ENCODE measurements at regions of chr14 and their contacts with region 1.

Region 1: DNA sequence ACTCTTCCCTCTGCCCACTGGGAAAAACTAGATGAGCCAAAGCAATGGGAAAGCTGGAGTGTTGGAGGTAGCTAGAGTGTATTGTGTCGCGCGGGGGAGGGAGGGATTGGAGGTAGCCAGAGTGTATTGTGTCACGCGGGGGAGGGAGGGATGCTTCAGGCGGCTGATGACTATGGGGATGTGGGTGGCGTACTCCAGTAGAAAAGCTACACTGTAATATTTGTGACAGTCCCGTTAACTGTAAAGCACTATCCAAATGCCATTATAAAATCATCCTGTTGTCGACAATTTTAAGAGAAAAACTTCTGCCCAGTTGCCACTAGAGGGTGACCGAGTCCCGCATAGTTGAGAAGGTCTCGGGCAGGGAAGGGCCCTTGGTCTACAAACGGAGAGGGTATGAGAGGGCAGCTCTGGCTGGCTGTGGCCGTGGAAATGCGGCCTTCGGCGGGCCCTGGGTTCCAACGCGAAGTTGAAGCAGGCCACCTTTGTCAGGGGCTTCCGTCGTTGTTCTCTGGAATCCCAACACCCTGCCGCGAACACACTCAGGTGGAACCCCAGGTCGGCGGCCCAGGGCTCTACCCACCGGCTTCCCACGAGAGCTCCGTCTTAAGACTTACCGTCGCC is 15.1 kb upstream of the PLEK2 start:
- DNase-seq: peak; percentile 67
- H3K4me3 ChIP-seq: no peak overlapping the region
- H3K27ac ChIP-seq: no peak overlapping the region
- H3K4me1 ChIP-seq: peaks cover 2% of the 10 kb centered on the region
- H3K27me3 ChIP-seq: peaks cover 1 to 2% of the 10 kb centered on the region in 2 experiments
- CTCF ChIP-seq: peak; percentile 73 to 78
- POLR2A ChIP-seq: no peak

Region 2: GRCh38 chr14:67377916-67378315 is 49.2 kb before region 1 on chr14:
- CTCF ChIA-PET with region 1: no interaction called
- POLR2A ChIA-PET with region 1: no interaction called
- dilution Hi-C with region 1: no loop called
- intact Hi-C with region 1: no loop called
- DNase-seq: no peak
- H3K4me3 ChIP-seq: no peak overlapping the region
- H3K27ac ChIP-seq: no peak overlapping the region
- H3K4me1 ChIP-seq: peaks cover 7% of the 10 kb centered on the region
- H3K27me3 ChIP-seq: no peaks in the 10 kb centered on the region
- CTCF ChIP-seq: no peak
- POLR2A ChIP-seq: no peak

Region 3: GRCh38 chr14:67396501-67396900 is 30.6 kb before region 1 on chr14:
- CTCF ChIA-PET with region 1: interaction called, 12 read pairs
- POLR2A ChIA-PET with region 1: no interaction called
- dilution Hi-C with region 1: no loop called
- intact Hi-C with region 1: no loop called
- DNase-seq: no peak
- H3K4me3 ChIP-seq: no peak overlapping the region
- H3K27ac ChIP-seq: peak overlapping the region; percentile 2
- H3K4me1 ChIP-seq: peaks cover 16% of the 10 kb centered on the region
- H3K27me3 ChIP-seq: no peaks in the 10 kb centered on the region
- CTCF ChIP-seq: no peak
- POLR2A ChIP-seq: no peak

Region 4: DNA sequence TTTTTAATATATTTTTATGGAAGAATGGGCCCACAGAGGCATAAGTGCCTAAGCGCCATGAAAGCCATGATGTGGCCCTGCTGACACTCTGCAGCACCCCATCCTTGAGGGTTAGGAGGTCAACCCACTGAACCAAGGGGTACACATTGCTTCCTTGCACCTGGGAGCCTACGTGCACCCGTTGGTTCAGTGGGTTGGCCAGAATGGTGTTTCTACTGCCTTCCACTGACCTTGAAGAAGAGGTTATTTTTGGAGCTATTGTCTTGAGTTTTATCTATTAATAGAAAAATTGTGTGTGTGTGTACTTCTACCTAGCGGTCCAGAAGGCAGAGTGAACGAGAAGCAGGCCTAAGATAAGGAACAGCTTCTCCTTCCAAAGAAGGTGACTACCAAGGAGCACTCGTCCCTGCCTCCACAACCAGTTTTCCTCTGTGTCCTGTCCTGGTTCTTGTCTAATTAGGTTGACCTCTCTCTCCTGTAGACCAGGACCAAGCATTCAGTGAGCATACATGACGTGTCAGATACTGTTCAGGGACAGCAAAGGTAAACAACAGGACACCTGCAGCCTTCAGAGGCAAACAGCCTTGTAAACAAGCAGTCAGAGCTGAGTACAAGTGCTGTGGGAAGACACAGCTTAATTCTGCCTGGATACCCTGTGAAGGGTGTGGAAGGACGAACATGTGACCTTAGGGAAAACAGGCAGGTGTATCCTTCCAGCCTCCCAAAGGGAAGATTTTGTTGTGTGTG is 15.2 kb after region 1 on chr14:
- CTCF ChIA-PET with region 1: interaction called, 34 read pairs
- POLR2A ChIA-PET with region 1: no interaction called
- dilution Hi-C with region 1: no loop called
- intact Hi-C with region 1: no loop called
- DNase-seq: no peak
- H3K4me3 ChIP-seq: no peak overlapping the region
- H3K27ac ChIP-seq: no peak overlapping the region
- H3K4me1 ChIP-seq: peaks cover 9% of the 10 kb centered on the region
- H3K27me3 ChIP-seq: peaks cover 0 to 4% of the 10 kb centered on the region in 2 experiments
- CTCF ChIP-seq: no peak
- POLR2A ChIP-seq: no peak

Region 5: GRCh38 chr14:67526676-67527459 is 99.8 kb after region 1 on chr14:
- CTCF ChIA-PET with region 1: interaction called, 48 read pairs
- POLR2A ChIA-PET with region 1: no interaction called
- dilution Hi-C with region 1: no loop called
- intact Hi-C with region 1: loop called (anchors 2 kb)
- DNase-seq: peak; percentile 62
- H3K4me3 ChIP-seq: no peak overlapping the region
- H3K27ac ChIP-seq: no peak overlapping the region
- H3K4me1 ChIP-seq: no peaks in the 10 kb centered on the region
- H3K27me3 ChIP-seq: peaks cover 29 to 36% of the 10 kb centered on the region in 2 experiments
- CTCF ChIP-seq: peak; percentile 56 to 70
- POLR2A ChIP-seq: no peak

Region 6: DNA sequence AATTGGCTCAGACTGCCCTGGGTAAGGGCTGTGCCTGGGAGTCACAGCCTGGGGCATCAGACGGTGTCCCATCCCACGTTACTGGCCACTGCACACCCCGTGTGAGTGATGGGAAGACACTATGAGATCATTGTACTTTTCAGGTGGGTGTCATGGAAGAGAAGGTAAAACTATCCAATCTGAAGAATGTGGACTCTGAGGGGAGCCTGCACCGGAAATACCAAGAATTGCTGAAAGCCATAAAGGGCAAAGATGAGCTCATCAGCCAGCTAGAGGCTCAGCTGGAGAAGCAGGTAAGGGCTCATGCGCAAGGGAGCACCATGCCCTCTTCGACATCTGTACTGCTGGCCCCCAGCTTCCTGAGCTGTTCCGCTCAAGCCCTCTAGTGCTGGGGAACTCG is 130.0 kb after region 1 on chr14:
- CTCF ChIA-PET with region 1: interaction called, 10 read pairs
- POLR2A ChIA-PET with region 1: no interaction called
- dilution Hi-C with region 1: no loop called
- intact Hi-C with region 1: no loop called
- DNase-seq: no peak
- H3K4me3 ChIP-seq: no peak overlapping the region
- H3K27ac ChIP-seq: no peak overlapping the region
- H3K4me1 ChIP-seq: no peaks in the 10 kb centered on the region
- H3K27me3 ChIP-seq: peaks cover 0 to 2% of the 10 kb centered on the region in 2 experiments
- CTCF ChIP-seq: no peak
- POLR2A ChIP-seq: no peak

Region 7: DNA sequence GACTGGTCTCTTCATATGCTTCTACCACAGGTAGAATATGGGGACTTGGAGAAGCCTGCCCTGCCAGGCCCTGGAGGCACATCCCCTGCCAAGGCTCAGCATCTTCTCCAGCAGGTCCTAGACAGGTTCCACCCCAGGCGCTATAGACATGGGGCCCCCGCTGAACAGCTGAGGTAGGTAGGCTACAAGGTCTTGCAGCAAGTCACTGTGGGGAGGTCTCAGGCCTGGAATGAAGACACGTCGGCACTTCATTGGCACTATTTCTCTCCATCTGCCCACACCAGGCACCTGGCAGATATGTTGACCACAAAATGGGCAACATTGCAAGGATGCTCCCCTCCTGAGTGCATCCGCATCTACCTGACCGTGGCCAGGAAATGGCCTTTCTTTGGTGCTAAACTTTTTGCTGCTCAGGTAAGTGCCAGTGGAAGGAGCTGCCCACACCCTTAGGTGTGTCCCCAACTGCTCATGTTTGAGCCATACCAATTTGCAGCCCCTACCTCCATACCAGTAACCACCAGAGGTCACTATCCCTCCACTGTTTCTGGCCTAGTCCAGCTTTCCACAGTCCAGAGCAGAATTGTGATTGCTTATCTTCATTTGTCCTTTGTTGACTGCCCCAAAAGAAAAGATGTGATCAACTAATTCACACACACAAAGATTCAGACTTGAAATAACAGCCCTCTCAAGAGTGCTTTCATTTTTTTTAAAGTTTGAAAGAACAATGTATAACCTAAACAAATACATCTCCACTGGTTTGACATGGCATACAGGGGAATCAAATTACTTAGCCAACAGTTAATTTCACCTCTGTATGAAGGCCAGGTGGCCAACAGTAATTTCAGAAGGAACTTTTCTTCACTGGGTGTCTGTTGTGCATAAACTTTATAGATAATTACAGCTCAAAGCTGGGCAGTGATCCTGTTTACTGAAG is 156.9 kb after region 1 on chr14:
- CTCF ChIA-PET with region 1: interaction called, 38 read pairs
- POLR2A ChIA-PET with region 1: no interaction called
- dilution Hi-C with region 1: no loop called
- intact Hi-C with region 1: no loop called
- DNase-seq: peak; percentile 53
- H3K4me3 ChIP-seq: no peak overlapping the region
- H3K27ac ChIP-seq: no peak overlapping the region
- H3K4me1 ChIP-seq: no peaks in the 10 kb centered on the region
- H3K27me3 ChIP-seq: peaks cover 0 to 2% of the 10 kb centered on the region in 2 experiments
- CTCF ChIP-seq: peak; percentile 56 to 76
- POLR2A ChIP-seq: no peak

Region 8: GRCh38 chr14:67619446-67620216 is 192.5 kb after region 1 on chr14 and contains the start of gene ARG2:
- CTCF ChIA-PET with region 1: interaction called, 4 read pairs
- POLR2A ChIA-PET with region 1: no interaction called
- dilution Hi-C with region 1: no loop called
- intact Hi-C with region 1: loop called (anchors 1 kb)
- DNase-seq: peak; percentile 96
- H3K4me3 ChIP-seq: peak within 1 kb of the TSS; percentile 63 to 73 (median 67)
- H3K27ac ChIP-seq: peak within 1 kb of the TSS; percentile 71
- H3K4me1 ChIP-seq: peaks cover 28% of the 10 kb centered on the region
- H3K27me3 ChIP-seq: peaks cover 2 to 4% of the 10 kb centered on the region in 2 experiments
- CTCF ChIP-seq: no peak
- POLR2A ChIP-seq: no peak
- total RNA-seq, gene ARG2: 19.8 and 22.5 TPM in 2 replicates

Measured in endothelial cell of umbilical vein (primary cell).